ENCODE measurements at regions of chr3 and their contacts with region 1.

Region 1: DNA sequence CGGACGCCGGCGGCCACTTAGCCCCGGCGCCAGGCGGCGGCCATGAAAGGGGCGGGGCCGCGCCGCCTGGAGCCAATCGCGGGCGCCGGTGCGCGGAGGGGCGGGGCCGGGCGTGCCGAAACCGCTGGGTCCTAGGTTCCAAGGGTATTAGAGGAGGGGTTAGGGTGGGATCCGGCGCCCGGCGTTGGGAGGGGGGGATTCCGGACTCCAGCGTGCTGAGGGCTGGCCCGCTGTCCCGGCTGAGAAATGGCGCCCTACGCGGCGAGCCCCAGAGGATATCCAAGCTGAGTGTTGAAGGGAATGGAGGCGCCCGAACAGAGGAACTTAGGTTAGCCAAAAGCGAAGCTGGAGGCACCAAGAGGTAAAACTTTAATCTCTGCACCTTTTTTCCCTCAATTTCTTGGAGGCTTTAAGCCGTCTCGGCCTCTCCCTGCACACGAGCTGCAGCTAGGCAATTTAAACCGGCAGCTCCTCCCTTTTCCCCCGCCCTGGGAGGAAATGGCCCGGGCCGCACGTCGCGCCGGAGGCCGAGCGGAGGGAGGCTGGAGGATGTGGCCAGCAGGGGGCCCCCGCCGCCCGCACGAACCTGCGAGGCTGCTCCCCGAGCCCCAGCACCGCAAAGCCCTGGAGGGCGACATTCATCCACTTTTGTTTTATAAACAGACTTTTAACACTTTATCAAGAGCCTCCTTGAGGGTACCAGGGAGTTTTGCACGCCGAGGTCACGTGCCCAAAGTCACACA is at the start of gene XXYLT1:
- DNase-seq: peak; percentile 85
- H3K4me3 Mint-ChIP-seq: peak within 1 kb of the TSS; percentile 89
- H3K27ac Mint-ChIP-seq: peak within 1 kb of the TSS; percentile 91
- H3K4me1 Mint-ChIP-seq: peaks cover 30% of the 10 kb centered on the region
- H3K27me3 Mint-ChIP-seq: no peaks in the 10 kb centered on the region
- total RNA-seq, gene XXYLT1: 14.5 and 14.9 TPM in 2 replicates

Region 2: DNA sequence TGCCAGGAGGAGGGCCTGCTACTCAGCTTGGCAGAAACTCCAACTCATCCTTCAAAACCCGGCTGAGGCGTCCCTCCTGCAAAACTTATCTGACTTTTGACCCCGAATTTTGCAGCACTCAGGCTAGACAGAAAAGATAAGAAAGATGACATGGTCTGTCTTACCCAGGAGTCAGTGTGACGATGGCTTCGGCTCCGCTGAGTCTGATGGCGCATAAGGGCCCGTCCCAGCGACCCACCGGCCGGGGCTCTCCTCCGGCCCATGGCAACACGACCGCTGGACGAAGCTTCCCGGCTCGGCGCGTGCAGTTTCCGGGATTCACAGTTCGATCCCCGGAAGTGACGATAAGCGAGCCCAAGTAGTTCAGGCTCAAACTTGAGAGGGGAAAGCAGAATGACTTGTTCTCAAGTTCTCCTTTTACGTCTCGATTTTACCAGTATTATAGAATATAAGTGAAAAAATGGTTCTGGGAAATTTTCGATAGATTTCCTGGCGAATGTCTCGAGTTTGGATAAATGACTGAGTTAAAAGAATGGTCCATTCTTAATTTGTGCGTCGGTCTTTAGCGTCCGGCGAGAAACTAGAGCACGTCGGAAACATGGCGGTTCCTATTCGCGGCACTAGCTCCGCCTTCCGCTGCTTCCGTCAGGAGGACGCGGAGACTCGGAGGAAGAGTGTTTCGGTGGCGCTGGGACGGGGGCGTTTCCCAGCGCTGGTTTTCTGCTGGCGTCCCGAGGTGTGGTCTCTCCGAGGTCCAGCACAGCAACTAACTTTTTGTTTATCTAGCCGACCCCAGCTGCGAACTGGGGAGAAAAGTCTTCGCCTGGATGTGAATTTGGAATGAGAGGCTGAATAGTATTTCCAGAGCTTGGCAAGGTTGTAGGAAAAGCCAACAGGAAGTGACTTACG is 599.1 kb before region 1 on chr3 and contains the start of gene LSG1:
- intact Hi-C with region 1: loop called (anchors 1 kb)
- DNase-seq: peak; percentile 84
- H3K4me3 Mint-ChIP-seq: peak within 1 kb of the TSS; percentile 99
- H3K27ac Mint-ChIP-seq: peak within 1 kb of the TSS; percentile 97
- H3K4me1 Mint-ChIP-seq: peaks cover 68% of the 10 kb centered on the region
- H3K27me3 Mint-ChIP-seq: peaks cover 3% of the 10 kb centered on the region
- total RNA-seq, gene LSG1: 65.1 and 66.3 TPM in 2 replicates

Region 3: GRCh38 chr3:195059006-195059350 is 212.3 kb before region 1 on chr3:
- intact Hi-C with region 1: no loop called
- DNase-seq: no peak
- H3K4me3 Mint-ChIP-seq: no peak overlapping the region
- H3K27ac Mint-ChIP-seq: no peak overlapping the region
- H3K4me1 Mint-ChIP-seq: no peaks in the 10 kb centered on the region
- H3K27me3 Mint-ChIP-seq: peaks cover 5% of the 10 kb centered on the region

Region 4: GRCh38 chr3:195147649-195148095 is 123.6 kb before region 1 on chr3:
- intact Hi-C with region 1: no loop called
- DNase-seq: peak; percentile 55
- H3K4me3 Mint-ChIP-seq: peak overlapping the region; percentile 82
- H3K27ac Mint-ChIP-seq: peak overlapping the region; percentile 22
- H3K4me1 Mint-ChIP-seq: peaks cover 43% of the 10 kb centered on the region
- H3K27me3 Mint-ChIP-seq: peaks cover 6% of the 10 kb centered on the region

Region 5: DNA sequence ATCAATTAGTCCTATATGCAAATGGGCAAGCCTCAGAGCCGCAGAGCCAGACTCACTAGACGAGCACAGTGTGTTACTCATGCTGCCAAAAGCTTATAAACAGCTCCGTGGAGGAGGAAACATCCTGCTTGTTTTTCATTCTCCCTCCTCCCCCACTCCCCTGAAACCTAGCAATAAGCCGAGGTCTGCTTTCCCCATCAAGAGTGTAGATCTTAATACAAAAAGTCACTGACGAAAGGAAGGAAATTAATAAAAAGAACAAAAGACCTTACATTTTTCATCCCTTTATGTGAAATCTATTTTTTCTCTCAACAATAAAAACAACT is 88.9 kb before region 1 on chr3:
- intact Hi-C with region 1: no loop called
- DNase-seq: no peak
- H3K4me3 Mint-ChIP-seq: no peak overlapping the region
- H3K27ac Mint-ChIP-seq: no peak overlapping the region
- H3K4me1 Mint-ChIP-seq: peaks cover 45% of the 10 kb centered on the region
- H3K27me3 Mint-ChIP-seq: no peaks in the 10 kb centered on the region

Region 6: DNA sequence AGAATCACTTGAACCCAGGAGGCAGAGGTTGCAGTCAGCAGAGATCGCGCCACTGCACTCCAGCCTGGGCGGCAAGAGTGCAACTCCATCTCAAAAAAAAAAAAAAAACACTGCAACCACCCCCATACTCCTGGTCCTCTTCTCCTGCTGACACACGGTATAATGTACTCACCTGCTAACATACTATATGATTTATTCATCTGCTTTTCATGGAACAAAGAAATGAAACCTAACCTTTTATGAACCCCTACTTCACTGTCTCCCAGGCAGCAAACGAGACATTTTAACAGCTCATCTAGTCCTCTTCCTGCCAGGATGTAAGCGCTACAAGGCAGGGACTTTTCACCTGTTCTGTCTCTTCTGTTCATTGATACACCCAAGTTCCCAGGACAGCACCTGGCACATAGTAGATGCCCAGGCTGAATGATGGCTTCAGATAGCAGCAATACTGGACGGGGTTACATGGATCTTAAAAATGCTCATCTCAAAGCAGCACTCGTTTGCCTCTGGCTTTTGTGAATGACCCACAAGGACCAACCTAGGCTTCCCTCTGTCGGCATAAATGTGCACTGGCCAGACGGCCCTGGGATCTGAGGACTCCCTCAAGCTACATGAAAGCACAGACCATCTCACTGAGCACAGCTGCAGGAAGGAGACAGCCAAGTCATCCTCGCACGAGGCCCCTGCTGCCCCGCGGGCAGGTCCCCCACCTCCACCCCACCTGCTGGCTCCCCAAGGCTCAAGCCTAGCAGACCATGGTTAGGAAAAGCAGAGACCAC is 20.6 kb before region 1 on chr3:
- intact Hi-C with region 1: no loop called
- DNase-seq: no peak
- H3K4me3 Mint-ChIP-seq: no peak overlapping the region
- H3K27ac Mint-ChIP-seq: no peak overlapping the region
- H3K4me1 Mint-ChIP-seq: peaks cover 19% of the 10 kb centered on the region
- H3K27me3 Mint-ChIP-seq: peaks cover 2% of the 10 kb centered on the region

Region 7: GRCh38 chr3:195442573-195443390 is 171.5 kb after region 1 on chr3 and contains the start of gene ACAP2:
- intact Hi-C with region 1: loop called (anchors 1 kb)
- DNase-seq: peak; percentile 99
- H3K4me3 Mint-ChIP-seq: peak within 1 kb of the TSS; percentile 92
- H3K27ac Mint-ChIP-seq: peak within 1 kb of the TSS; percentile 86
- H3K4me1 Mint-ChIP-seq: peaks cover 42% of the 10 kb centered on the region
- H3K27me3 Mint-ChIP-seq: no peaks in the 10 kb centered on the region
- total RNA-seq, gene ACAP2: 38.2 and 46.3 TPM in 2 replicates

Region 8: DNA sequence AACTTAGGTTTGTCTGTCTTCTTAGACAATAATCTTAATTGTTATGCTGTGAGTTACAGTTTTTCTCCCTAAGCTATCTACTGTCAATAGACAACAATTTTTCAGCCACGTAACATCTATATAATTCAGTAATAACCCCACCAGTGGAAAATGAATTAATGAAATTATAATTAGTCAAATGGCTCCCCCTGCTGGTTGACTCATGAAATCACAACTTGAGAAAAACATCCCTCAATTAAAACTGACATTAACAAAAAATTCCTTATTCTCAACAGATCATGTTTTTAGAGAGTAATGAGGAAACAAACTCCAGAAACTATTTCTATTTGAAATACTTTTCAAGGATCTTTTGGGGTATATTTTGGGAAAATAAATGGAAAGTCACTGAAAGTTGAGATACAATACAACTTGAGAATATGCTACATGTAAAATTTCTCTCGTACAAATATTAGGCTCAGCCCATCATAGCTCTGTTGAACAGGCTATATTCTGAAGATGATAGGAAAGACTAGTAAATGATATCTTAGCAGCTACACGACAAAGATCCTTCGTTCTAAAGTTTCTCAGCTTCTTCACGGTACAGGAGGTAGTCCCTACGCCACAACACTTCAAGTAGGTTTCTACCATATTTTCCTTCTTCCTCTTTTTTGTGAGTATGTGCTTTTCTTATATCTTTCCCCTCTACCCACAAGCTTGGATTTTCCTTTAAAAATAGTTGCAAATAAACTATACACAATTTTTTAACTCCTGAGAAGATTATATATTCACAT is 251.2 kb after region 1 on chr3:
- intact Hi-C with region 1: loop called (anchors 1 kb)
- DNase-seq: no peak
- H3K4me3 Mint-ChIP-seq: no peak overlapping the region
- H3K27ac Mint-ChIP-seq: no peak overlapping the region
- H3K4me1 Mint-ChIP-seq: peaks cover 35% of the 10 kb centered on the region
- H3K27me3 Mint-ChIP-seq: no peaks in the 10 kb centered on the region

Region 9: DNA sequence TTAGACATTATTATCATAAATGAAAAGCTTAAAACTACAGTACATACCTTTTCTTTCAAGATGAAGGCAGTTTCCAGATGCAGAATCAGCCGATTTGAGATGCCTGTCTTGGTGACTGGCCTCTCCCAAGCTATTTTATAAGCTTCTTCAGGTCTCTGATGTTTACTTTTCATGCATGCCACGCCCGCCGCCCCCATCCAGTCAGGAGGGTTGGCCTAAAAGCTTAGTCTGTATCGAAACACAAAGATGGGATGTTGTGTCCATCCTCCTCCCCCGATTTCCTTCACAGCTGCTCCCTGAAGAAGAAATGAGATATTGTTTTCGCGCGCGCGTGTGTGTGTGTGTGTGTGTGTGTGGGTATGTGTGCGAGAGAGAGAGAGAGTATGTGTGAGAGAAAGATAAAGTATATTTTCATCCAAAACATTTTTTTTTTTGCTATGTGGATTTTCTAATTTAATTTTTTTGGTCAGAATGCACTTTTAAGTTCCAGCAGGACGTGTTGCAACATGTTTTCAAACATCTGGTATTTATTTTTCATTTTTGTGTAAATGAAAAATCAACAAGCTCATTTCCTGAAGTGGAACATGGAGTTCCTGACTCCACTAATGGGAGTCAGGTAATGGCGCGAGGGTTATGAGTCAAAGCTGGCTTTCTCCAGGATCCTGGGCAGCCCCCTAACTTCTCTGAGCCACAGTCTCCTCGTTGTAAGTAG is 312.7 kb after region 1 on chr3 and contains the start of gene APOD:
- intact Hi-C with region 1: loop called (anchors 1 kb)
- DNase-seq: no peak
- H3K4me3 Mint-ChIP-seq: no peak within 1 kb of the TSS
- H3K27ac Mint-ChIP-seq: no peak within 1 kb of the TSS
- H3K4me1 Mint-ChIP-seq: peaks cover 21% of the 10 kb centered on the region
- H3K27me3 Mint-ChIP-seq: peaks cover 3% of the 10 kb centered on the region
- total RNA-seq, gene APOD: 3.4 and 4.0 TPM in 2 replicates